ENCODE measurements at regions of chr16 and their contacts with region 1.

Region 1: GRCh38 chr16:53968454-53968853 is 264.5 kb downstream of the FTO start:
- DNase-seq: no peak
- ATAC-seq: peak; percentile 59

Region 2: DNA sequence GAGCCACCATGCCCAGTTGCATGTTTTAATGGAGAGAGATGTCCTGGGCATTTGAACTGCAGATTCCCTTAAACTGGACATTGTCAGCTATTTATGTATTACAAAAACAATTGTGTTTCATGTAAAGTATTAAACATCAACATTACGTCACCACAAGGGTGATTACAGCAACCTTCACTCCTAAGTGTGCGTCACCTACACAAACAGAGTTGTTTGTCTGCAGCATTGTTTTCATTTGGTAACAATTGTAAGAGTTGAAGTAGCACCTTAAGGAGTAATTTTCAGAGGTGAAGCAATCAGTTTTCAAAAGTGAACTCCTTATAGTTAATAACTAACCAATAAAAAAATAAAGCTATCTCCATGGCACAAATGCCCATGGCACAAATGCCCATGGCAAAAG is 46.7 kb after region 1 on chr16:
- intact Hi-C with region 1: no loop called
- DNase-seq: no peak
- ATAC-seq: no peak

Region 3: GRCh38 chr16:54062361-54063278 is 94.2 kb after region 1 on chr16:
- intact Hi-C with region 1: no loop called
- DNase-seq: no peak
- ATAC-seq: no peak

Region 4: GRCh38 chr16:54171626-54172525 is 203.4 kb after region 1 on chr16:
- intact Hi-C with region 1: loop called (anchors 10 kb)
- DNase-seq: no peak
- ATAC-seq: no peak

Region 5: DNA sequence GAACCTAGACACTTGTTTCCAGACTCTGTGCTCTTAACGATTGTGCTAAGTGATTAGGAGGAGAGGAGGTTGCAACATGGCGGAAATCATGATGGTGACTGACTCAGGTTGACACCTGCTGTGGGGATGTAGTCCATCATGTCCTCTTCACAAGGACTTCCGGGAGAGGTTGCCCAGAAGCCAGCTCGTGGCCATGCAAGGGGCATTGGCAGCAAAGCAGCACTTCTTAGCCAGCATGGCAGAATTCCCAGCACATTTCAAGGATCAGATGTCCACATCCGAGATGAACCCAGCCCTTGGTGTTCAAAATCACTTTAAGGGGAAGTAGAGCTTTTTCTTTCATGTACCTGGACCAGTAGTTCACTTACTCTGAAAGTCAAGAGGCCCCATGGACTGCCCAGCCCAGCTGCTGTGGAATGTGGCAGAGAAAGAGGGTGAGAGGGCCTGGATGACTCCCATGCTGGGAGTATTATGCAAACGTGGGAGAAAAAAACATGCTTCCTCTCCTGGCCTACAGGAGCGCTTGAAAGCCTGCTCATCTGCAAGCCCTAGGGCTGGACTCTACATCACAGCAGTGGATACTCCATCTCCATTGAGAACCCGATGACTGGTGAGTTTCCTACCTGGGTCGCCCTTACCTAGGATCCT is 1421.1 kb after region 1 on chr16:
- intact Hi-C with region 1: loop called (anchors 10 kb)
- DNase-seq: no peak
- ATAC-seq: peak; percentile 77

Measured in Right ventricle myocardium inferior (tissue), 1 donor.